Mammary epithelial cell (primary cell): ENCODE measurements at regions of chr7 and their contacts with region 1.

Region 1: GRCh38 chr7:49166441-49166840 is 242.1 kb downstream of the CDC14C start:
- DNase-seq: no peak
- H3K4me3 ChIP-seq: no peak overlapping the region
- H3K27ac ChIP-seq: no peak overlapping the region
- H3K4me1 ChIP-seq: no peaks in the 10 kb centered on the region
- H3K27me3 ChIP-seq: no peaks in the 10 kb centered on the region
- CTCF ChIP-seq: peak; percentile 3 to 34

Region 2: DNA sequence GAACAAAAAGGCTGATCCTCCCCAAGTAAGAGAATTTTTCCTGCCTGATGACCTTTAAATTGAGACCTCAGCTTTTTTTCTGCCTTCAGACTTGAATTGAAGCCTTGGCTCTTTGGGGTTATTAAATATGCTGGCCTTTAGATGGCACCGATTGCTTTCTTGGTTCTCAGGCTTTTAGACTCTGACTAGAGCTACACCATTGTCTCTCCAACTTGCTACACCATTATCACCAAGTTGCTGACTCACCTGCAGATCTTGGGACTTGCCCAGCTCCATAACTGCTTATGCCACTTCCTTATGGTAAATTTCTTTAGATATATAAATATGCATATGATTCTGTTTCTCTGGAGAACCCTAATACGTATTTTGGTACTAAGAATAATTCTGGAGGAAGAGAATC is 998.3 kb before region 1 on chr7:
- CTCF ChIA-PET with region 1: no interaction called
- dilution Hi-C with region 1: no loop called
- in situ Hi-C with region 1: no loop called
- intact Hi-C with region 1: loop called (anchors 5 kb)
- DNase-seq: peak; percentile 84
- H3K4me3 ChIP-seq: no peak overlapping the region
- H3K27ac ChIP-seq: no peak overlapping the region
- H3K4me1 ChIP-seq: peaks cover 10% of the 10 kb centered on the region
- H3K27me3 ChIP-seq: no peaks in the 10 kb centered on the region
- CTCF ChIP-seq: peak in 1 of 2 donors; percentile 42

Region 3: GRCh38 chr7:49001610-49002033 is 164.8 kb before region 1 on chr7:
- CTCF ChIA-PET with region 1: no interaction called
- dilution Hi-C with region 1: no loop called
- in situ Hi-C with region 1: no loop called
- intact Hi-C with region 1: loop called (anchors 2 kb)
- DNase-seq: peak; percentile 31
- H3K4me3 ChIP-seq: no peak overlapping the region
- H3K27ac ChIP-seq: no peak overlapping the region
- H3K4me1 ChIP-seq: no peaks in the 10 kb centered on the region
- H3K27me3 ChIP-seq: peaks cover 2% of the 10 kb centered on the region
- CTCF ChIP-seq: peak; percentile 75 to 83